ENCODE measurements at regions of chr1 and their contacts with region 1.

Region 1: GRCh38 chr1:198465201-198466144 is 75.0 kb downstream of the ATP6V1G3 start:
- DNase-seq: no peak
- H3K4me3 ChIP-seq: no peak overlapping the region
- H3K27ac ChIP-seq: no peak overlapping the region
- H3K4me1 ChIP-seq: no peaks in the 10 kb centered on the region
- H3K27me3 ChIP-seq: no peaks in the 10 kb centered on the region
- CTCF ChIP-seq: peak; percentile 30 to 77 (median 63)
- POLR2A ChIP-seq: no peak

Region 2: GRCh38 chr1:197521118-197521739 is 944.2 kb before region 1 on chr1:
- intact Hi-C with region 1: loop called (anchors 10 kb)
- DNase-seq: no peak
- H3K4me3 ChIP-seq: no peak overlapping the region
- H3K27ac ChIP-seq: no peak overlapping the region
- H3K4me1 ChIP-seq: no peaks in the 10 kb centered on the region
- H3K27me3 ChIP-seq: no peaks in the 10 kb centered on the region
- CTCF ChIP-seq: peak; percentile 23 to 73 (median 56)
- POLR2A ChIP-seq: no peak

Region 3: DNA sequence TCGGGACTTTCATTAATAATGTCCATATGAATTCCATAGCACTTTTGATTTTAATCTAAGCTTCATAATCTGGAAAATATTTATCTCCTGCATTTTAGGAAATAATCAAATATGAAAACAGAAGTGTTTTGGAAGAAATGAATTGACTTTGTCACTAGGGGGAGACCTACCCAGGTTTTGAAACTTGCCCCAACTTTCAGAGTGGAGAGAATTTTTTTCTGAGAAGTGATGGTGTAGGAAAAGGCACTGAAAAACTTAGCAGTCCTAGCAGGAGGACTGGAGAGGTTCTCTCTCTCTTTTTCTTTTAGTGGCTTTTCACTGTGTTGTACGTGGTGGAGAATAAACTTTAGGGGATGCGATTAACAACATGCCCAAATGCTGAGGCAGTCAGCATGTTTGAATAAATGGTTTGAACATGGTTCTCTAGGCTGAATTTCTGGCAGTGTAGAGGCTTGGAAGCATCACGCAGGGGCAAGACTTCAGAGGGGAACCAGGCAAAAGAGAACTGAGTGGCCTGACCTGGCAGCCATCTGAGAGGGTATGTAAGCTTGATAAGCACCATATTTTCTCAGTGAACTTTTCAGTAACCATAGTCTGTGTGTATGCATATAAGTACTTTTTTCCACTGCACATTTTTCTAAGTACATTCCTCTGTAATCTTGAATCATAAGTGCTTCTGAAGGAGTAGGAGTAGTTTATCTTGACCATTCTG is 377.0 kb before region 1 on chr1:
- intact Hi-C with region 1: loop called (anchors 10 kb)
- DNase-seq: no peak
- H3K4me3 ChIP-seq: no peak overlapping the region
- H3K27ac ChIP-seq: no peak overlapping the region
- H3K4me1 ChIP-seq: peaks cover 0 to 10% (median 0%) of the 10 kb centered on the region in 6 donors
- H3K27me3 ChIP-seq: no peaks in the 10 kb centered on the region
- CTCF ChIP-seq: peak in 9 of 11 experiments; percentile 20 to 63 (median 55)
- POLR2A ChIP-seq: no peak